Thyroid gland (tissue), 4 donors: ENCODE measurements at regions of chr22 and their contacts with region 1.

Region 1: GRCh38 chr22:24101911-24102321 is 79.4 kb upstream of the SUSD2 start:
- DNase-seq: no peak
- H3K4me3 ChIP-seq: no peak overlapping the region
- H3K27ac ChIP-seq: no peak overlapping the region
- H3K4me1 ChIP-seq: peaks cover 5 to 14% of the 10 kb centered on the region in 2 donors
- H3K27me3 ChIP-seq: no peaks in the 10 kb centered on the region
- CTCF ChIP-seq: no peak
- POLR2A ChIP-seq: no peak

Region 2: DNA sequence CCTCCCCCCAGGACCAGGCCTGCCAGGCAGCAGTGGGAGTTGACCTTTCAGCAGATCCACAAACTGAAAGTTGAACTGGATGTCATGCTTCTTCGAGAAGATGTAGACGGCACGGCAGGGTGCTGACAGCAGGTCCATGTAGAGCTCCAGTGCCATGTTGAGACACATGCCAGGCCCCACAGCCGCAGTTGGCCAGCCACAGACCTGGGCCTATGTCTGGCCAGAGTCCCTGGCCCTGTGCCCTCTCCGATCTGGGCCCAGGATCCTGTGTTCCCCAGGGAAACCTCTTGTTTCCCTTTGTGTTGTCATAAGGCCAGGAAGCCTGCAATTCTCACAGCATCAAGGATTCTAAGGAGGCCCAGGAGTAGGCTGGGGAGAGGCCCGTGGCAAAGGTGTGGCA is 96.7 kb before region 1 on chr22 and contains the start of gene GSTT4:
- intact Hi-C with region 1: loop called (anchors 5 kb)
- DNase-seq: peak; percentile 73 to 74
- H3K4me3 ChIP-seq: no peak within 1 kb of the TSS
- H3K27ac ChIP-seq: peak within 1 kb of the TSS in 2 of 3 donors; percentile 35 to 47
- H3K4me1 ChIP-seq: peaks cover 4 to 9% of the 10 kb centered on the region in 2 donors
- H3K27me3 ChIP-seq: no peaks in the 10 kb centered on the region
- CTCF ChIP-seq: no peak
- POLR2A ChIP-seq: no peak
- total RNA-seq, gene GSTT4: not detected

Region 3: GRCh38 chr22:24175160-24175808 is 73.4 kb after region 1 on chr22:
- intact Hi-C with region 1: loop called (anchors 5 kb)
- DNase-seq: peak; percentile 76 to 79
- H3K4me3 ChIP-seq: no peak overlapping the region
- H3K27ac ChIP-seq: peak overlapping the region; percentile 20 to 58 (median 40)
- H3K4me1 ChIP-seq: peaks cover 0 to 8% of the 10 kb centered on the region in 2 donors
- H3K27me3 ChIP-seq: no peaks in the 10 kb centered on the region
- CTCF ChIP-seq: peak; percentile 51 to 83 (median 76)
- POLR2A ChIP-seq: no peak

Region 4: DNA sequence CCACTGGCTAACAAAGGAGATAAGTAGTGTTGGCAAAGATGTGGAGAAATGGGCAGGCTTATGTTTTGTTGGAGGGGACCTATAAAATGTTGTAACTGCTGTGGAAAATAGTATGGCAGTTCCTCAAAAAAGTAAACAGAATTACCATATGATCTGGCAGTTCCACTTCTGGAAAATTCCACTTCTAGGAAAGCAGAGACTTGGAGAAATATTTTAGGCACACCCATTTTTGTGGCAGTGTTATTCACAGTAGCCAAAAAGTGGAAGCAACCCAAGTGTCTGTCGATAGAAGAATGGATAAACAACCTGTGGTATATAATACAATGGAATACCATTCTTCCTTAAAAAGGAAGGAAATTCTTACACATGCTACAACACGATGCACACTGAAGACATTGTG is 268.5 kb after region 1 on chr22:
- intact Hi-C with region 1: no loop called
- DNase-seq: no peak
- H3K4me3 ChIP-seq: no peak overlapping the region
- H3K27ac ChIP-seq: no peak overlapping the region
- H3K4me1 ChIP-seq: no peaks in the 10 kb centered on the region
- H3K27me3 ChIP-seq: no peaks in the 10 kb centered on the region
- CTCF ChIP-seq: no peak
- POLR2A ChIP-seq: no peak